GM10248 (cell line): ENCODE measurements at regions of chr1 and their contacts with region 1.

Region 1: DNA sequence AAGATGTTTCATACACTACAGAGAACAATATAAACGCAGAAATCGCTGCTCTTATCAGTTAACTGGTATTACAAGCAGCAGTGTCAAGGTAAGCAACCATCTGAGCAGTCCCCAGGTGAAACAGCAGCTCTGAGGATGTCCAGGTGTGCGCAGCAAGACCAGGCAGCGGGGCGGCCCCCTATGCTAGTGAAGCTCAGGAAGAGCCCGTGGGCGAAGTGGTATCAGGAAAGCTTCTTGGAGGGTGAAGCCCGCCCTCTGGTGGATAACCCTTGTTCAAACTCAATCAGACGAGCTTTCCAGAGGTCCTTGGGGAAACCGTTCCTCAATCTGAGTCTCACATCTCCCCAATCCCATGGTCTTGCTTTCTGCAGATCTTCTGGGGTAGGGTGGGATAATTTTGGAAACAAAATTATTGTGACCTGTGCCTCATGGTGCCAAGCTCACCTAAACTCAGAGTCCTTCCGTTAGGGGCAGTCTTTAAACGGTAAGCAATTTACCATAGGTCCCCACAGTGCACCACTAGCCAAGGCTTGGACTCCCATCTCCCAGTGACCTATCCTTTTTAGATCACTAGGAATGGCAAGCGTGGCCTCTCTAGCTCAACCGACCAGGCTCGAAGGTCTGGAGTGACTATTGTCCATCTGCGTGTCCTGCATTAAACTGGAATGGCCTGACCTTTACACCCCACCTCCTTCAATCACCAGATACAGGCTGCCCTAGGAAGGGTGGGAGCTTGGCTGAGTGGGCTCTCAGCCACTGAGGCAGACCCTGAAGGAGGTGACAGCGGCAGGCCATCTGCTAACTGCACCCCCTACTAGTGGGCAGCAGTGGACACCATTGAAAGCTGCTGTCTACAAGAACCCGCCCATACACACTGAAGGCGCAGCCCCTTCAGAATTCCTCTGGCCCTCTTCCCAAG is 13.6 kb upstream of the FAM110D start:
- DNase-seq: peak; percentile 81
- CTCF ChIP-seq: peak; percentile 74

Region 2: GRCh38 chr1:26057189-26057588 is 88.1 kb before region 1 on chr1:
- CTCF ChIA-PET with region 1: interaction called, 10 read pairs
- POLR2A ChIA-PET with region 1: no interaction called
- DNase-seq: no peak
- CTCF ChIP-seq: no peak

Region 3: GRCh38 chr1:26111530-26112406 is 33.5 kb before region 1 on chr1 and contains the start of gene PDIK1L:
- CTCF ChIA-PET with region 1: interaction called, 115 read pairs
- POLR2A ChIA-PET with region 1: interaction called, 4 read pairs
- DNase-seq: peak; percentile 92
- CTCF ChIP-seq: no peak

Region 4: GRCh38 chr1:26156704-26157038 is 11.4 kb after region 1 on chr1:
- CTCF ChIA-PET with region 1: interaction called, 37 read pairs
- POLR2A ChIA-PET with region 1: no interaction called
- DNase-seq: no peak
- CTCF ChIP-seq: no peak

Region 5: DNA sequence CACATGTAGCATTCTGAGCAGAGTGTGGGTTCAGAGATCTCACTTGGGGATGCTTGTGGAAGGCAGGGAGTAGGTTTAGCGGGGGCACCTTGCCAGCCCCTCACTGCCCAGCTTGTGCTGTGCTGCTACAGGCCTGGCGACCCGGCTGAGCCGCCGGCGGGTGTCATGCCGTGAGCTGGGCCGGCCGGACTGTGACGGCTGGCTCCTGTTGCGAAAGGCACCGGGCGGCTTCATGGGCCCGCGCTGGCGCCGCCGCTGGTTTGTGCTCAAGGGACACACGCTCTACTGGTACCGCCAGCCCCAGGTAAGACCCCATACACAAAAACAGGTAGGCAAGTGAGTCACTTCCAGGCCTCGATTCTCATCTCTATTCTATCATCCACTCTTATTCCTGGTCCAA is 39.6 kb after region 1 on chr1:
- CTCF ChIA-PET with region 1: no interaction called
- POLR2A ChIA-PET with region 1: no interaction called
- DNase-seq: no peak
- CTCF ChIP-seq: no peak